ENCODE measurements at regions of chr1 and their contacts with region 1.

Region 1: DNA sequence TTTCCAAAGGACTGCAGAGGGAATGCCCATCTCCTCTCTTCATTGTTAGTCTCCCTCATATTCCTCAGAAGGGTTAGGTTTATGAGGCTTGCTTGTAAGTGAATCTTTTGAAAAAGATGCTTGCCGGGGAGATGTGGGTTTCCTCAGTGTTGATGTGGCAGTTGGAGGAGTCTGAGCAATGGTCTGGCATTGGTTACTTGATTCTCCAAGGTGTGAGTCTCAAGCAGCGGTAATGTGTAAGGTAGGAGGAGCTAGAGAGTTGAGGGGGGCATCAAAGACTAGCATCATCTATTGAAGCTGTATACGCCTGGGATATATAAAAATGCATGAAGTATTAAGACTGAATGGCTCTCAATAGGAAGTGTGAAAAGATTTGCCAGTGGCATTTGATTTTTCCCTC is 21.5 kb downstream of the KHDRBS1 start:
- DNase-seq: no peak
- H3K4me3 ChIP-seq: no peak overlapping the region
- H3K27ac ChIP-seq: no peak overlapping the region
- H3K4me1 ChIP-seq: no peaks in the 10 kb centered on the region
- H3K27me3 ChIP-seq: no peaks in the 10 kb centered on the region

Region 2: DNA sequence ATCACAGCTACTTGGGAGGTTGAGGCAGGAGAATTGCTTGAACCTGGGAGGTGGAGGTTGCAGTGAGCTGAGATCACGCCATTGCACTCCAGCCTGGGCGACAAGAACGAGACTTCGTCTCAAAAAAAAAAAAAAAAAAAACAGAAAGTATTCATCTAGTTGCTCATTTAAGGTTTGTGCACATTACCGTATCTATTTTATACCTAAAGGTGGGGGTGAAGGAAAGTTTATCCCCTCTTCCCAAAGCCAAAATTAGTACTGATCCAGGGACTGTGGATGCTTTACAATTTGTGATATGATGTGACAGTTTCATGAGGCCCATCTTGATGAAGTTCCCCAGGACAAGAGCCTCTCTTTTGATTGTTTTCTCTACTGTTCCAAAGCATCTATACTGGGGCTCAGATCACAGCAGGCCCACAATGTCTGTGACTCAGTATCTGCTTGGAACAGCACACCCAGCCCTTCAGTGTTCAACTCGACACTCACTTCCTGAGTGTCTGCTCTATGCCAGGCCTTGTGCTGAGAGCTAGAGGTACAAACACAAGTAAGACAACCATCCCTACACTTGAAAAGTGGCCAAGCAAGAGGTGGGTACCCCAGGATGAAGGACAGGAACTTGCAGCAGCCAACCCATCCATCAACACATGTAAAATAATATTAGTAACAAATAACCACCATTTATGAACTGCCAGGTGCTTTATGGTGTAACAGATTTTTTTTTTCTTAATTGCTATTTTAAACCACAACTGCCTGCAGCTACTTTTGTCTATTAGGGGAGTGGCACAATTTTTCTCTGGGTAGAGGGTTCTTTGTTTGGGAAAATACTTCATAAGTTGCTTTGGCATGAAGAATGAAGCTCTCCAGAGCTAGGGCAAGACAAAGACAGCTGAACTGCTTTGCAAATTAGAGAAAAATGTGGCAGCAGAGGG is 50.4 kb before region 1 on chr1:
- CTCF ChIA-PET with region 1: no interaction called
- POLR2A ChIA-PET with region 1: no interaction called
- DNase-seq: peak in 2 of 3 donors; percentile 25 to 46
- H3K4me3 ChIP-seq: peak overlapping the region in 2 of 7 experiments; percentile 6 to 45
- H3K27ac ChIP-seq: peak overlapping the region in 1 of 2 experiments; percentile 37
- H3K4me1 ChIP-seq: peaks cover 3 to 32% (median 26%) of the 10 kb centered on the region in 4 experiments
- H3K27me3 ChIP-seq: peaks cover 0 to under 1% (median 0%) of the 10 kb centered on the region in 5 experiments

Region 3: GRCh38 chr1:32023351-32023750 is 11.8 kb before region 1 on chr1:
- CTCF ChIA-PET with region 1: interaction called, 19 read pairs
- POLR2A ChIA-PET with region 1: no interaction called
- DNase-seq: no peak
- H3K4me3 ChIP-seq: no peak overlapping the region
- H3K27ac ChIP-seq: no peak overlapping the region
- H3K4me1 ChIP-seq: peaks cover 0 to 14% (median 11%) of the 10 kb centered on the region in 4 experiments
- H3K27me3 ChIP-seq: no peaks in the 10 kb centered on the region

Region 4: DNA sequence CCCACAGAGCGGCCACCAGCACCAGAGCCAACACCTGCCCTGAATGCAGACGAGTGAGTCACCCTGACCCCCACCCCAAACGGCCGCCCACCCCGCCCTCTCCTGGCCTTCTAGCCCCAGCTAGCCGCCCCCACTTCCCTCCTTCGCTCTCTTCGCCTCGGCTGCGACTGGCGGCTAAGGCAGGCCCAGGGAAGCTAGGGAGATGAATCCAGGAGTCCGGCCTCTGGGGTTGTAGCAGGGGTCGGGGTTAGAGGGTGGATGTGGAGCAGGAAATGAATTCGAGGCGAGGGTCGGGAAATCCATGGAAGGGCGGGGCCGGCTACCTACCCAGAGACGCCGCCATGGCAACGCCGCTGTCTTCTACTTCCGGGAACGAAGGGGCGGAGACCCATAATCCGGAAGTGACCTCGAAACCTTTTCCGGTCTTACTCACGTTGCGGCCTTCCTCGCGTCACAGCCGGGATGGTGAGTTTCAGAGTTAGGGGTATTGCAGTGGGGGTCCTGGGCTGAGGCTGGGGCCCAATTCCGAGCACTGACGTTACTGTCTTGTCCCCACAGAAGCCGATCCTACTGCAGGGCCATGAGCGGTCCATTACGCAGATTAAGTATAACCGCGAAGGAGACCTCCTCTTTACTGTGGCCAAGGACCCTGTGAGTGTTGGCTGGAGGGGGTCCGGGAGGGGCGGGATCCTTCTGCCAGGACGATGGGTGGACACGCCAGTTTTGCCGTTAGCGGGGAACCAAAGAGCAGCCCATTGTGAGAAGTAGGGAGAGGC is 187.0 kb after region 1 on chr1 and contains the starts of genes EIF3I and TMEM234:
- CTCF ChIA-PET with region 1: no interaction called
- POLR2A ChIA-PET with region 1: no interaction called
- DNase-seq: peak; percentile 96 to 97 (median 97)
- H3K4me3 ChIP-seq: peak within 1 kb of the TSS; percentile 65 to 97 (median 85)
- H3K27ac ChIP-seq: peak within 1 kb of the TSS; percentile 99 to 100
- H3K4me1 ChIP-seq: peaks cover 3 to 29% (median 22%) of the 10 kb centered on the region in 4 experiments
- H3K27me3 ChIP-seq: no peaks in the 10 kb centered on the region

Region 5: DNA sequence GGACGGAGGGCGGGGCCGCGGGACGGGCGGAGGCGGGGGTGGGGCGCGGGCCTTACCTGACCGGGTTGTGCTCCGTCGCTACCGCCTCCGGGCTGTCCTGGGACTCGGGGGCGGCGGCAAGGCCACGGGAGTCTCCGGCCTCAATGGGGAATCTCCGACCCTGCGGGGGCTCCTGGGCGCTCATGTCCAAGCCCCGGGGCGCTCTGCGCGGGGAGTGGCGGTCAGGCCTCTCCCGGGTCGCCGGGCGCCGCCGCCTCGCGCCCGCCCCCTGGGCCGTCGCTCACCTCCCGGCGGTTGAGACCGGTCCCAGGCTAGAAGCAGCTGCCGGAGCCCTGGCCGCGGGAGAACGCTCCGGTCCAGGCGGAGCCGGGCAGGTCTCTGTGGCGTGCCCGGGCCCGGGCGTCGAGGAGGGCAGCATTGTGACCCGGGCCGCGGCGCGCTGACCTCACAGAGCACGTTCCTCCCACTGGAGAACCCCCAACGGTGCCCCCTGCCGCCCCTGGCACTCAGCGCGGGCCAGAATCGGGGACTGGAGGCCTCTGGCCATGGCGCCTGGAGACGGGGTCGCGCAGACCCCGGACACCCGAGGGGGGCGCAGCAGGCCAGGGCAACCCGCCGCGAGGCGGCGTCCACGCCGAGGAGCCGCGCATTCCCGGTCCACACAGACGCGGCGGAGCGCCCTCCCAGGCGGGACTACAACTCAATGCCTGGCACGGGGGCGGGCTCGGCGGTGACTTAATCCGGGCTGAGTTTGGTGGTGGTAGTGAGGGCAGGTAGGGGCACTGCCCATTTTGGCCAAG is 326.8 kb after region 1 on chr1:
- CTCF ChIA-PET with region 1: no interaction called
- POLR2A ChIA-PET with region 1: no interaction called
- DNase-seq: peak; percentile 34 to 39 (median 34)
- H3K4me3 ChIP-seq: peak overlapping the region in 5 of 7 experiments; percentile 15 to 64 (median 54)
- H3K27ac ChIP-seq: no peak overlapping the region
- H3K4me1 ChIP-seq: peaks cover 3 to 18% (median 15%) of the 10 kb centered on the region in 4 experiments
- H3K27me3 ChIP-seq: peaks cover 0 to 14% (median 2%) of the 10 kb centered on the region in 5 experiments